RWPE1 (cell line): ENCODE measurements at regions of chr1 and their contacts with region 1.

Region 1: GRCh38 chr1:15272009-15272788 is 25.2 kb downstream of the FHAD1 start:
- DNase-seq: peak; percentile 82
- H3K27ac ChIP-seq: no peak overlapping the region
- CTCF ChIP-seq: peak; percentile 79

Region 2: DNA sequence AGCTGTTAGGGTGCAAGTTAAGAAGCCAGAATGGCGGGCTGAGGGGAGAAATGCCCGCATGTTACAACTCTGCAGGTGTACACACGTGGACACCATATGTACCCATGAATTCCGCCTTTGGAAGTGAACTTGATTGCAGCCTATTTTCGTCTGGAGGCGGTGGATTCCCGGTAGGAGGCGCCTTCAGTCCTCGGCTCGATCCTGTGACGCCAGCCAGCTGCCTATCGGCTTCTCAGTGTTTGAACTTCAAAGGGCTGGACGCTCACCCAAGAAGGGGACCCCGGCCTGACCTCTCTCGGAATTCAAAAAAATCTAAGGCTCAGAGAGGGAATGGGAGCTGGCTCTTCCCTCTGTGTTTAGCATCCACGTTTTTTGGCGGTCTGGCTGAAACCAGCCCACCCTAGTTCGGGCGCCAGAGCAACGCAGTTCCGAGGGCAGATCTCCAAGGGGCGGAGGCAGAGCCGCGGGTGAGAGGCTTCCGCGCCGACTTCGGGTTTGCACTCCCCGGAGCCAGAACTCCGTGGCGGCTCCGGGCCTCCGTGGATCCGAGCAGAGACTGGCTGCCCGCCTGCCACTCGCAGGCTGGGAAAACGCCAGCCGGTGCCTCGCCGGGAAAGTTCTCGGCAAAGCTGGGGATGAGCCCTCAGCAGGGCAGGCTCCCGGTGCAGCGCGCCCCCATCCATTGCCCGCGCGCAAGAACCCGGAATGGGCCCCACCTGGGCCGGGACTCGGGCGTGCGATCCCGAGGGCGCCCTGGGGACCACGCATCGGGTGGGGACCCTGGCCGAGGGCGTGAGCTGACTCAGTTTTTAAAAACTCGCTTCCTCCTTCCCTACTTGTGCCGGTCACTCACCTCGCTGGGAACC is 119.6 kb before region 1 on chr1:
- CTCF ChIA-PET with region 1: interaction called, 29 read pairs
- POLR2A ChIA-PET with region 1: interaction called, 3 read pairs
- DNase-seq: peak; percentile 87
- H3K27ac ChIP-seq: peak overlapping the region; percentile 88
- CTCF ChIP-seq: peak; percentile 80